ENCODE measurements at regions of chr11 and their contacts with region 1.

Region 1: DNA sequence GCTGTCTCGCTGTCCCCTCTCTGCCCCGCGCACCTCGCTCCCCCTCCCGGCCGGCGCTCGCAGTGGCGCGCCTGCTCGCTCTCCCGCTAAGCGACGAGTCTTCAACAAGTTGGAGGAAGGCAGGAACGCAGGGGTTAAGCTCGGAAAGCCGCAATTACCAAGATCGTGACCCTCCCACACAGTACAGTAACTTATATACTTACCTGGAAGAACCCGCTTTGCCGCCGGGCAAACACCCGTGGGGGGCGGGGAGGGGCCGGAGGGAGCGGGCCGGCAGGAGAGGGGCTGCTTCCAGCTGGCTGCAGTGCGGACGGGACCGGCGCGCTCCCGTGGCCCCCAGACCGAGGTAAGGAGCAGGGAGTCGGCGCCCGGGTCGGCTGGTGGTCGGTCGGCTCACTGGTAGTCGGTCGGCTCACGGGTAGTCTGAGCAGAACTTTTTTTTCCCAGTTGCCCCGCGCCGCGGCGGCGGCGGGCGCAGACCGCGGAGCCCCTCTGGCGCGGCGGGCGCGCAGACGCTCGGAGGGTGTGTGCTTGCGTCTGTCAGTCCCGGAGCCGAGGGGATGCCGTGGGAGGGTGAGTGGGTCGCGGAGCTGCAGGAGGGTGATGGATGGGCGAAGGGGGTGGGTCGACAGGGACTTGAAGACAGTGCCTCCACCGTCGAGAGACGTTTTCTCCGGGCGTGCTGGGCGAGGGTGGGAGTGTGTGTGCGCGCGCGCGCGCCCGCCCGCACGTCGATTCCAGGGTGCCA is 101.2 kb upstream of the HSD17B12 start:
- DNase-seq: peak; percentile 64
- H3K4me3 ChIP-seq: peak overlapping the region; percentile 42 to 49 (median 46)
- H3K27ac ChIP-seq: no peak overlapping the region
- H3K4me1 ChIP-seq: peaks cover 23% of the 10 kb centered on the region
- H3K27me3 ChIP-seq: peaks cover 76% of the 10 kb centered on the region
- CTCF ChIP-seq: peak; percentile 13 to 59

Region 2: DNA sequence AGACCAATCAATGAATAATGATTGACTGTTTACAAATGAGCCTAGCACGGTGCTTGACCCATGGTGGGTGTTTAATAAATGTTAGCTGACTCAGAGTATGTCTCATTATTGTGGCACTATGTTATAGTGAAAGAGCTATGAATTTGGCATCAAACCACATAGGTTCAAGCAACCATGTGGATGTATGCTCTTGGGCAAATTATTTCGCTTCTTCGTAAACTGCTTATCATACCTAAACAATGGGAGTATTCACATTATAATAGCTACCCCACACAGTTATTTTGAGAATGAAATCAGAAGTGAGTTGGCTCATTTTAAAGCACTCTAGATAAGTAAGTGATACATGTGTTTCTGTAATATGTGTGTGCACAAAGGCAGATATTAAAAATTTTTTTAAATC is 17.5 kb before region 1 on chr11:
- CTCF ChIA-PET with region 1: interaction called, 16 read pairs
- dilution Hi-C with region 1: no loop called
- in situ Hi-C with region 1: no loop called
- intact Hi-C with region 1: no loop called
- DNase-seq: no peak
- H3K4me3 ChIP-seq: no peak overlapping the region
- H3K27ac ChIP-seq: no peak overlapping the region
- H3K4me1 ChIP-seq: no peaks in the 10 kb centered on the region
- H3K27me3 ChIP-seq: peaks cover 11% of the 10 kb centered on the region
- CTCF ChIP-seq: no peak

Region 3: DNA sequence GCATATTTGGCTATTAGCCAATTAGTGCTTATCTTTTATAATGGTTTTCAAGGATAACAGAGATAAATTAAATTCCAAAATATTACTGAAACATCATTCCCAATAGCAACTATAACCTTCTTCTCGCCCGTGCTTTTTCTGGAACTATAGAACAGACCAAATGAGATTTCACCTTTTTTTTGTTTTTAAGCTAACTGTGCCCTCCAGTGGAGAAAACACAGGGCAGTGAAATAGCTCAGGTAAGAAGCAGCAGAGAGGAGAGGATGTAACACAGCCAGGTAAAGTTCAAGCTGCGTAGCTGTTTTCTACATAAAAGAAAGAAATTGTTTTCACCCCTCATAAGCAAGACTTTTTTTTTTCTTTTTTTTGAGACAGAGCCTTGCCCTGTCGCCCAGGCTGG is 129.4 kb after region 1 on chr11:
- CTCF ChIA-PET with region 1: no interaction called
- dilution Hi-C with region 1: no loop called
- in situ Hi-C with region 1: no loop called
- intact Hi-C with region 1: loop called (anchors 2 kb)
- DNase-seq: no peak
- H3K4me3 ChIP-seq: no peak overlapping the region
- H3K27ac ChIP-seq: no peak overlapping the region
- H3K4me1 ChIP-seq: no peaks in the 10 kb centered on the region
- H3K27me3 ChIP-seq: no peaks in the 10 kb centered on the region
- CTCF ChIP-seq: peak; percentile 25 to 40

Region 4: GRCh38 chr11:43852057-43852636 is 272.8 kb after region 1 on chr11:
- CTCF ChIA-PET with region 1: no interaction called
- dilution Hi-C with region 1: no loop called
- in situ Hi-C with region 1: loop called in 1 of 2 experiments (anchors 10 kb)
- intact Hi-C with region 1: loop called (anchors 2 kb)
- DNase-seq: peak; percentile 59
- H3K4me3 ChIP-seq: no peak overlapping the region
- H3K27ac ChIP-seq: no peak overlapping the region
- H3K4me1 ChIP-seq: peaks cover 5% of the 10 kb centered on the region
- H3K27me3 ChIP-seq: no peaks in the 10 kb centered on the region
- CTCF ChIP-seq: peak; percentile 84 to 87